Ovary (tissue), 10 donors: ENCODE measurements at regions of chr9 and their contacts with region 1.

Region 1: DNA sequence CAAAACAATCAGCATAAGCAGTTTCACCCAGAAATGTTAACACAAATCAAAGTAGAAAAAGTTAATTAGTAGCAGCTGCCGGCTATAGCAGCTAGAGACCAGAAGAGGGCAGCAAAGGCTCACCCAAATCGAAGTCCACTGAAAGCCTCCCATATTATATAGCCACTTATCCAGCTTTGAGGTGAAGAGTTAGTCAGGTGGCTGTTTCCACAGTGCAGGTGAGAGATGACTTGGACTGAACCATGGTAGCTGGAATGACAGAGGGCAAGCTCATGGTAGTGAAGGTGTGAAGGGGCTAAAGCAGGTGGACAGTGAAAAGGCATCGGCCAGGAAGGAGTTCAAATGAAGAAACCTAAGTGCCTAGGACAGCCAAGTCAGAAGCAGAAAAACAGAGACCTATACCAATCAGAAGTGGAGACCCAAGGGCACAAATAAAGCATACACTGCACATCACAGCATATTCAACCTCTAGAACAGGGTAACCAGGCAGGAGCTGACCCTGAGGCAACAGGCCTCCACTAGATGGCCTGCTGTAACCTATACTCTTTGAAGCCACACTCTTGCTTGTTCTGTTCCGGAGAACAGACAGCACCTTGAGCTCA is 7.2 kb upstream of the RNF38 start:
- DNase-seq: peak; percentile 46 to 68 (median 61)
- H3K4me3 ChIP-seq: no peak overlapping the region
- H3K27ac ChIP-seq: no peak overlapping the region
- H3K4me1 ChIP-seq: peaks cover 1% of the 10 kb centered on the region
- H3K27me3 ChIP-seq: no peaks in the 10 kb centered on the region
- CTCF ChIP-seq: peak; percentile 83 to 90 (median 85)
- EP300 ChIP-seq: no peak
- POLR2A ChIP-seq: no peak

Region 2: DNA sequence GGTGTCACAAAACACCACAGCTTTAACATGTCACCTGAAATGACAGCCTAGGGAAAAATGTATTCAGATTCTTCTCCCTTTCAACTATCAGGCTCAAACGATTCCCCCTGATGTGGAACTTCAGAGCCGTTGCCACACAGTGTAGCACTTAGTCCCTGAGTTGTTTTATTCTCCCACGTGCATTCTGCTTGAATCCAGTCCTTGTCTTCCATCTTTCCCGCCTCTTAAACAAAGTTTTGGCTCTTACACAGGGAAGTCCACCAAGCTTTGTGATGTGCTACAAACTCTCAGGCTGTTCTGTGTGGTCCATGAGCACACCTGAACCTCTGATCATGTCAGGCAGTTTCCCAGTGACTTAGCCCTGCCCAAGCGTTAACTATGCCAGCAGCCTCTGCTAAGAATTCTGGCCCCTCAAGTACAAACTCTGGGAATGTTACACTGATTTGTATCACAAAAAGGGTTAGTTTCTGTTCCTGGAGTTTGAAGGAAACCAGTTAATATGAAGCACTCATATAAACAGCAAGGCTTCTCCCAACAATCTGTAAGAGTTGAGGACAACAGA is 38.7 kb after region 1 on chr9:
- intact Hi-C with region 1: loop called in 1 of 4 experiments (anchors 5 kb)
- DNase-seq: no peak
- H3K4me3 ChIP-seq: no peak overlapping the region
- H3K27ac ChIP-seq: no peak overlapping the region
- H3K4me1 ChIP-seq: peaks cover 2% of the 10 kb centered on the region
- H3K27me3 ChIP-seq: no peaks in the 10 kb centered on the region
- CTCF ChIP-seq: no peak
- EP300 ChIP-seq: no peak
- POLR2A ChIP-seq: no peak

Region 3: DNA sequence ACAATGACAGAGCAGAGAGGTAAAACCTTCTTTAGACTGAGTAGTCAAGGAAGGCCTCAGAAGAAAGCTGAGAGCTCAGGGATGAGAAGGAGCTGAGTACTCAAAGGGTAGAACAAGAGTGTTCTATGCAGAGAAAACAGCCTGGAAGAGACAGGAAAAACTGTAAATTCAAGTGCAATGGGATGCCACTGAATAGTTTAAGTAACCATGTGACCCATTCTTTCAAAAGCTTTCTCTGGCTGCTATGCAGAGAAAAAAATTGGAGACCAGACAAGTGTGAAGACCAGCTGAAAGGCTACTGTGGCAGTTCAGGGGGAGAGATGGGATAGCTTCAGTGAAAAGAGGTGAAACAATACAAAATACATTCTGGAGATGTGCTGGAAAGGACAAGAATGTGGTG is 54.1 kb after region 1 on chr9:
- intact Hi-C with region 1: no loop called
- DNase-seq: no peak
- H3K4me3 ChIP-seq: no peak overlapping the region
- H3K27ac ChIP-seq: no peak overlapping the region
- H3K4me1 ChIP-seq: peaks cover 9% of the 10 kb centered on the region
- H3K27me3 ChIP-seq: no peaks in the 10 kb centered on the region
- CTCF ChIP-seq: no peak
- EP300 ChIP-seq: no peak
- POLR2A ChIP-seq: no peak

Region 4: DNA sequence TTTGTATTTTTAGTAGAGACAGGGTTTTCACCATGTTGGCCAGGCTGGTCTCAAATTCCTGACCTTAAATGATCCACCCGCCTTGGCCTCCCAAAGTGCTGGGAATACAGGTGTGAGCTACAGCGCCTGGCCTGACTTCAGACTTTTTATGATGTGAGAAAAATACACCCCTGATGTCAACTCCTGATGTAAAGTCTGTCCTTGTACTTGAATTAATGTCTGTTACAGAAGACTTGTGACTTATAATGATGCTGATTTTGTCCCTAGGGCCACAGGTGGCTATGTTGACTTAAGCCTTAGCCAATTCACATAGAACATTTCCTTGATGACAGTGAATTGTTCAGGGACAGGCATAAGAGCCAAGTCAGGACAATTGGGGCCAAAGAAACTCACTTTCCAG is 123.0 kb after region 1 on chr9:
- intact Hi-C with region 1: no loop called
- DNase-seq: no peak
- H3K4me3 ChIP-seq: no peak overlapping the region
- H3K27ac ChIP-seq: no peak overlapping the region
- H3K4me1 ChIP-seq: no peaks in the 10 kb centered on the region
- H3K27me3 ChIP-seq: no peaks in the 10 kb centered on the region
- CTCF ChIP-seq: no peak
- EP300 ChIP-seq: no peak
- POLR2A ChIP-seq: no peak

Region 5: DNA sequence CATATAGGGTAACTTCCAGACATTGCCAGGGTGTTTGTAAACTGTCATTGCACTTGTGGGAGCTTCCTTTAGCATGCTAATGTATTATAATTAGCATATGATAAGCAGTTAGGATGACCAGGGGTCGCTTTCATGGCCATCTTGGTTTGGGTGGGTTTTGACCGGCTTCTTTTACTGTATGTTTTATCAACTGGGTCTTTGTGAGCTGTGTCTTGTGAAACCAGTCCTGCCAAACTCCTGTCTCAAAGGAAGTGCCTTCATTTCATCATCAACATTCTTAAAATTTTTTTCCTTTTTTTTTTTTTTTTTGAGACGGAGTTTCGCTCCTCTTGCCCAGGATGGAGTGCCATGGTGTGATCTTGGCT is 153.6 kb after region 1 on chr9:
- intact Hi-C with region 1: loop called (anchors 2 to 5 kb)
- DNase-seq: no peak
- H3K4me3 ChIP-seq: no peak overlapping the region
- H3K27ac ChIP-seq: no peak overlapping the region
- H3K4me1 ChIP-seq: no peaks in the 10 kb centered on the region
- H3K27me3 ChIP-seq: no peaks in the 10 kb centered on the region
- CTCF ChIP-seq: no peak
- EP300 ChIP-seq: no peak
- POLR2A ChIP-seq: no peak